ENCODE measurements at regions of chr5 and their contacts with region 1.

Region 1: DNA sequence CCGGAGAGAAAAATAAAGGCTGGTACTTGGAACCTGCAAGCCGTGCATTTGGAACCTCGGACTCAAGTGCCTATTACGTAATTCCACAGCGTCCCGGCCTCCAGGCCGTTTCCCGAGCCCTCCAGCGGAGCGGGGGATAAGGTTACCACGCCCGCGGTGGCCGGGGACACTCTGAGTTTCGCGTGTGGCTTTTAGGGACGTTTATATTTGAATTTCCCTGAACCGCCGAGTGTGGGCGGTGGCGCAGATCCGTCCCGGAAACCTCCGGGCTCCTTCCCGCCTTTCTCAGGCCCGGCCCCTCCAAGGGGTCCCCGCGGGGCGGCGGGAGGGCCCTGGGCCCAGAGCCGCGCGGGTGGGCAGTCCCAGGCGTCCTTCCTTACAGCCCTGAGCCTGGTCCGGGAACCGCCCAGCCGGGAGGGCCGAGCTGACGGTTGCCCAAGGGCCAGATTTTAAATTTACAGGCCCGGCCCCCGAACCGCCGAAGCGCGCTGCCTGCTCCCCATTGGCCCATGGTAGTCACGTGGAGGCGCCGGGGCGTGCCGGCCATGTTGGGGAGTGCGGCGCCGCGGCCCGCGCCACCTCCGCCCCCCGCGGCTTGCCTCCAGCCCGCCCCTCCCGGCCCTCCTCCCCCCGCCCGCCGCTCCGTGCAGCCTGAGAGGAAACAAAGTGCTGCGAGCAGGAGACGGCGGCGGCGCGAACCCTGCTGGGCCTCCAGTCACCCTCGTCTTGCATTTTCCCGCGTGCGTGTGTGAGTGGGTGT is at the start of gene LMNB1:
- DNase-seq: peak; percentile 96
- ATAC-seq: peak; percentile 73
- H3K4me3 ChIP-seq: peak within 1 kb of the TSS; percentile 74 to 96 (median 81)
- H3K4me3 Mint-ChIP-seq: peak within 1 kb of the TSS; percentile 92
- H3K27ac ChIP-seq: peak within 1 kb of the TSS; percentile 93 to 97
- H3K27ac Mint-ChIP-seq: peak within 1 kb of the TSS; percentile 99
- H3K4me1 ChIP-seq: peaks cover 19 to 32% of the 10 kb centered on the region in 2 donors
- H3K4me1 Mint-ChIP-seq: peaks cover 29% of the 10 kb centered on the region
- H3K27me3 ChIP-seq: no peaks in the 10 kb centered on the region
- H3K27me3 Mint-ChIP-seq: no peaks in the 10 kb centered on the region
- CTCF ChIP-seq: peak; percentile 6
- total RNA-seq, gene LMNB1: 25.1 and 27.7 TPM in 2 replicates

Region 2: GRCh38 chr5:125928663-125929062 is 848.0 kb before region 1 on chr5:
- CTCF ChIA-PET with region 1: no interaction called
- POLR2A ChIA-PET with region 1: no interaction called
- intact Hi-C with region 1: no loop called
- DNase-seq: no peak
- ATAC-seq: no peak
- H3K4me3 ChIP-seq: no peak overlapping the region
- H3K4me3 Mint-ChIP-seq: no peak overlapping the region
- H3K27ac ChIP-seq: no peak overlapping the region
- H3K27ac Mint-ChIP-seq: no peak overlapping the region
- H3K4me1 ChIP-seq: no peaks in the 10 kb centered on the region
- H3K4me1 Mint-ChIP-seq: no peaks in the 10 kb centered on the region
- H3K27me3 ChIP-seq: peaks cover 0 to 2% (median 1%) of the 10 kb centered on the region in 4 experiments
- H3K27me3 Mint-ChIP-seq: peaks cover 17% of the 10 kb centered on the region
- CTCF ChIP-seq: no peak

Region 3: DNA sequence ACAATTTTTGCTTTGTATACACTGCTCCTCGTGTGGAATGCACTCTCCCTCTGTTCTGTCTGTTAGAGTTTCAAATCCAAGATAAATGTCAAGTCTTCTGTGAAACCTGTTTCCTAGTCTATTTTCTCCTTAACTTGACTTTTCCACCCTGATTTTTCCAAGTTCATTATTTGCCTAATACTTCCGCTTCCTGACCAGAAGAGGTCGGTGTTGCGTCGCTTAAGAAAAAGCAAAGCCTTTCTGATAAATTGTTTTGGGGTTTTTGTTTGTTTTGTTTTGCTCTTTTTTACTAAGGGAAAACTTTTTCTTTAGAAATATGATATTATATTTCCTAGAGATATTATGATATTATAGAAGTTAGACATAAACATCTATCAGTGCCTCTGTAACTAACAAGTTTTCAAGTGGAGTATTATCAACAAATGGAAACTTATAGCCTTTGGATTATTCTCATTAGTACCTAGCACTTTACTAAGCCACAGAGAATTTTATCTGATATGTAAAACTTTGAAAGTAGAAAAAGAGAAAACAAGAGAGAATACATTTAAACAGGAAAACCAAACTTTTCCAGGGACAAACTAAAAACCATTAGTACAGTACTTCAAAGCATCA is 120.2 kb before region 1 on chr5:
- CTCF ChIA-PET with region 1: interaction called, 16 read pairs
- POLR2A ChIA-PET with region 1: interaction called, 5 read pairs
- intact Hi-C with region 1: loop called (anchors 1 kb)
- DNase-seq: peak; percentile 53
- ATAC-seq: peak; percentile 28
- H3K4me3 ChIP-seq: no peak overlapping the region
- H3K4me3 Mint-ChIP-seq: no peak overlapping the region
- H3K27ac ChIP-seq: no peak overlapping the region
- H3K27ac Mint-ChIP-seq: no peak overlapping the region
- H3K4me1 ChIP-seq: no peaks in the 10 kb centered on the region
- H3K4me1 Mint-ChIP-seq: peaks cover 5% of the 10 kb centered on the region
- H3K27me3 ChIP-seq: no peaks in the 10 kb centered on the region
- H3K27me3 Mint-ChIP-seq: peaks cover 3% of the 10 kb centered on the region
- CTCF ChIP-seq: peak; percentile 89

Region 4: GRCh38 chr5:126732716-126733115 is 44.0 kb before region 1 on chr5:
- CTCF ChIA-PET with region 1: no interaction called
- POLR2A ChIA-PET with region 1: no interaction called
- intact Hi-C with region 1: no loop called
- DNase-seq: no peak
- ATAC-seq: no peak
- H3K4me3 ChIP-seq: no peak overlapping the region
- H3K4me3 Mint-ChIP-seq: no peak overlapping the region
- H3K27ac ChIP-seq: no peak overlapping the region
- H3K27ac Mint-ChIP-seq: no peak overlapping the region
- H3K4me1 ChIP-seq: no peaks in the 10 kb centered on the region
- H3K4me1 Mint-ChIP-seq: peaks cover 4% of the 10 kb centered on the region
- H3K27me3 ChIP-seq: no peaks in the 10 kb centered on the region
- H3K27me3 Mint-ChIP-seq: no peaks in the 10 kb centered on the region
- CTCF ChIP-seq: no peak

Region 5: DNA sequence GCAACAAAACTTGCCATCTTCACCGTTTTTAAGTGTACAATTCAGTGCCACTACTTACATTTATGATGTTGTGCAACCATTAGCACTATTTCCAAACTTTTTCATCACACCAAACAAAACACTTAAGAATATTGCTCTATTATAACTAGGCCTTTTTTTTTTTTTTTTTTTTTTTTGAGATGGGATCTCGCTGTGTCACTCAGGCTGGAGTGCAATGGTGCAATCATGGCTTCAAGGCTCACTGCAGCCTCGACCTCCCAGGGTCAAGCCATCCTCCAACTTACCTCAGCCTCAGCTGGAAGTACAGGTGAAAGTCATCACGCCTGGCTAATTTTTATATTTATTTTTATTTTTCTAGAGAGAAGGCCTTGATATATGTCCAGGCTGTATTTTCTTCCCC is 22.1 kb before region 1 on chr5:
- CTCF ChIA-PET with region 1: interaction called, 48 read pairs
- POLR2A ChIA-PET with region 1: interaction called, 3 read pairs
- intact Hi-C with region 1: no loop called
- DNase-seq: no peak
- ATAC-seq: no peak
- H3K4me3 ChIP-seq: no peak overlapping the region
- H3K4me3 Mint-ChIP-seq: no peak overlapping the region
- H3K27ac ChIP-seq: no peak overlapping the region
- H3K27ac Mint-ChIP-seq: no peak overlapping the region
- H3K4me1 ChIP-seq: peaks cover 6 to 10% of the 10 kb centered on the region in 2 donors
- H3K4me1 Mint-ChIP-seq: peaks cover 18% of the 10 kb centered on the region
- H3K27me3 ChIP-seq: no peaks in the 10 kb centered on the region
- H3K27me3 Mint-ChIP-seq: no peaks in the 10 kb centered on the region
- CTCF ChIP-seq: no peak

Region 6: GRCh38 chr5:126808521-126808988 is 31.9 kb after region 1 on chr5:
- CTCF ChIA-PET with region 1: interaction called, 63 read pairs
- POLR2A ChIA-PET with region 1: interaction called, 3 read pairs
- intact Hi-C with region 1: loop called (anchors 2 kb)
- DNase-seq: peak; percentile 73
- ATAC-seq: peak; percentile 59
- H3K4me3 ChIP-seq: peak overlapping the region; percentile 8 to 61 (median 33)
- H3K4me3 Mint-ChIP-seq: peak overlapping the region; percentile 79
- H3K27ac ChIP-seq: peak overlapping the region; percentile 60 to 77
- H3K27ac Mint-ChIP-seq: peak overlapping the region; percentile 84
- H3K4me1 ChIP-seq: peaks cover 15 to 35% of the 10 kb centered on the region in 2 donors
- H3K4me1 Mint-ChIP-seq: peaks cover 55% of the 10 kb centered on the region
- H3K27me3 ChIP-seq: no peaks in the 10 kb centered on the region
- H3K27me3 Mint-ChIP-seq: no peaks in the 10 kb centered on the region
- CTCF ChIP-seq: peak; percentile 79

Region 7: DNA sequence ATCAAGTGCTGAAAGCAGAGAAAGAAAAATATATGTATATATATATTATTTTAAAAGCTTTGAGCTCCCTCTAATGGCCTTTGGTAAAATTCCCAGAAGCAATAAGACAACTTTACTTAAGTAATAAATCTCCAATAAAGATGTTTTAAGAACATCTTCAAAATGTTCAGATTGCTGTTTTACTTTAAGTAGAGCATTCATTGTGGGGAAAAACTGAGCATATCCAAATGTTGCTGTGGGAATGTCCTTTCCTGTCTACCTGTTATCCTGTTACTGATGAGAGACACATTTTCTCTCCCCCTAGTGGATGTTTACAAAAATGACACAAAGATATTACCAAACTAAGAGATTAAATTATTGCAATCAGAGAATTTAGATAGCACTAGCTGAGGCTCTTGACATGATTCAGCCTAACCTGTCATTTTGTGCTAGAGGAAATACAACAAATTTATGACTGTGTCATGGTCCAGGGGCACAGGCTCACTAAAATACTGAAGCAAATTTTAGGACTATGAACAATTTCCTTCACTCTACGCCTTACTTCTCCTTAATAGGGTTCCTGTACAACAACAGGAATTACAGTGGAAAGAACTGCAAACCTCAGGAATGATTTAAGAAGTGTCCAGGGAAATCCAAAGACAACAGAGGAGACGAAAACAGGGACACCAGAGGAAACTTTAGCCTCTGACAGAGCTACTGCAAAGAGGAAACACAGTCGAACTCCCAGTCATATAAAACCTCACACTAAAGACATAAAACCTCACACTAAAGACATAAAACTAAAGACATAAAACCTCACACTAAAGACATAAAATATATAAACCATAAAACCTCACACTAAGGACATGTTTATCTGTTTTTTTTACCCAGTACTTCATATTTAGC is 716.4 kb after region 1 on chr5:
- CTCF ChIA-PET with region 1: interaction called, 4 read pairs
- POLR2A ChIA-PET with region 1: no interaction called
- intact Hi-C with region 1: loop called (anchors 10 kb)
- DNase-seq: peak; percentile 68
- ATAC-seq: peak; percentile 45
- H3K4me3 ChIP-seq: no peak overlapping the region
- H3K4me3 Mint-ChIP-seq: no peak overlapping the region
- H3K27ac ChIP-seq: no peak overlapping the region
- H3K27ac Mint-ChIP-seq: no peak overlapping the region
- H3K4me1 ChIP-seq: no peaks in the 10 kb centered on the region
- H3K4me1 Mint-ChIP-seq: no peaks in the 10 kb centered on the region
- H3K27me3 ChIP-seq: peaks cover 0 to 6% (median 2%) of the 10 kb centered on the region in 4 experiments
- H3K27me3 Mint-ChIP-seq: peaks cover 23% of the 10 kb centered on the region
- CTCF ChIP-seq: peak; percentile 100

Region 8: DNA sequence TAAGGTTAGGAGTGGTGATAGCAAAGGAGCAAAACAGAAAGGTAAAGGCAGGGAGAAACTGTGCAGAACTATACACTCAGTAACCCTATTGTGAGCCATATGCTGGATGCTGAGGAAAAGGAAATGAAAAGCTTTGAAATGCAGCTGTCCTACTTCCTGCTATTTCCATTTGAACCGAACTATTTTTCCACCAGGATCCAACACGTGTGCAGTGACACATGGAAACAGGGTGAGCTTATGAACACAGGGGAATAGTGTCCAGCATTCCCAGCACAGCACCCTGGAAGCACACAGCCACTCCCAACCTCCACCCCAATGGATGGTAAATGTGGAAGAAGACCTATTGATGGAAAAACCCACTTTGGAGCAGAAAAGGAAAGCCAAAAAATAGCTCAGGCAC is 1237.9 kb after region 1 on chr5:
- CTCF ChIA-PET with region 1: no interaction called
- POLR2A ChIA-PET with region 1: no interaction called
- intact Hi-C with region 1: no loop called
- DNase-seq: no peak
- ATAC-seq: no peak
- H3K4me3 ChIP-seq: no peak overlapping the region
- H3K4me3 Mint-ChIP-seq: no peak overlapping the region
- H3K27ac ChIP-seq: no peak overlapping the region
- H3K27ac Mint-ChIP-seq: no peak overlapping the region
- H3K4me1 ChIP-seq: no peaks in the 10 kb centered on the region
- H3K4me1 Mint-ChIP-seq: no peaks in the 10 kb centered on the region
- H3K27me3 ChIP-seq: no peaks in the 10 kb centered on the region
- H3K27me3 Mint-ChIP-seq: no peaks in the 10 kb centered on the region
- CTCF ChIP-seq: no peak

Measured in B cell (primary cell).